ENCODE measurements at regions of chr5 and their contacts with region 1.

Region 1: DNA sequence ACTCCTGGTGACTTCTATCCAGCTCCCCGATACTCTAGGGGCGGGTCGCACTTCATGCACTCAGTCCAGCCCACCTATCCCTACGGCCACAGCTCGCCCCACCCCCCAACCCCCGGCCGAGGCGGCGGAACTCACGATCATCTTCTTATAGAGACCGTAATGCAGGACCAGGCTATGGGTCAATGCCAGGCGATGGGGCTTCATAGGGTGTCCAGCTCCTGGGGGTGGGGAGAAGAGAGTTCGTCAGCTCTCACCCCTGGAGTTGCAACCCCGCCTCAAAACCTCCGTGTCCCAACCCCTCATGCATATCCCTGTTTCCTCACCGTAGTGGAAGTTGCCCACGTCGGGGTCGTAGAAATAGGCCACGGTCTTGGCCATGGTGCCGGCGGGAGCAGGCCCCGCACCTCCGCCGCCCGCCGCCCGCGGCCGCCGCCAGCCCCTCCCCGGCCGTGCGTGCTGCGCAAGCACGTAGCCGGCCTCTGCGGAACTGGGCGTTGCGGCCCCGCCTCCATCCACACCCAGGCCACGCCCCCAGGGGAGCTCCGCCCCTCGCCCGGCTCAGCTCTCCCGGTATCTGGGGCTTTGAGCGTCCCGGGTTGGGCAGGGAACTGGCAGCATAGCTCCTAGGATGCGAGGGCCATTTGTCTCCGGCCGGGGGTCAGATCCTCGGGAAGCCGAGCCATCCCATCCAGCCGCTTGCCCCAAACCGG is at the starts of genes HDAC3 and RELL2:
- DNase-seq: peak; percentile 88 to 97 (median 94)
- ATAC-seq: peak; percentile 89
- H3K4me3 ChIP-seq: peak within 1 kb of the TSS; percentile 98 to 99
- H3K4me3 Mint-ChIP-seq: peak within 1 kb of the TSS; percentile 92
- H3K27ac ChIP-seq: peak within 1 kb of the TSS; percentile 78 to 81
- H3K27ac Mint-ChIP-seq: peak within 1 kb of the TSS; percentile 89
- H3K4me1 ChIP-seq: peaks cover 28% of the 10 kb centered on the region
- H3K4me1 Mint-ChIP-seq: peaks cover 50% of the 10 kb centered on the region
- H3K27me3 ChIP-seq: no peaks in the 10 kb centered on the region
- H3K27me3 Mint-ChIP-seq: no peaks in the 10 kb centered on the region
- CTCF ChIP-seq: no peak
- total RNA-seq, gene HDAC3: 48.9 to 54.8 TPM
- total RNA-seq, gene RELL2: 9.5 to 9.8 TPM

Region 2: DNA sequence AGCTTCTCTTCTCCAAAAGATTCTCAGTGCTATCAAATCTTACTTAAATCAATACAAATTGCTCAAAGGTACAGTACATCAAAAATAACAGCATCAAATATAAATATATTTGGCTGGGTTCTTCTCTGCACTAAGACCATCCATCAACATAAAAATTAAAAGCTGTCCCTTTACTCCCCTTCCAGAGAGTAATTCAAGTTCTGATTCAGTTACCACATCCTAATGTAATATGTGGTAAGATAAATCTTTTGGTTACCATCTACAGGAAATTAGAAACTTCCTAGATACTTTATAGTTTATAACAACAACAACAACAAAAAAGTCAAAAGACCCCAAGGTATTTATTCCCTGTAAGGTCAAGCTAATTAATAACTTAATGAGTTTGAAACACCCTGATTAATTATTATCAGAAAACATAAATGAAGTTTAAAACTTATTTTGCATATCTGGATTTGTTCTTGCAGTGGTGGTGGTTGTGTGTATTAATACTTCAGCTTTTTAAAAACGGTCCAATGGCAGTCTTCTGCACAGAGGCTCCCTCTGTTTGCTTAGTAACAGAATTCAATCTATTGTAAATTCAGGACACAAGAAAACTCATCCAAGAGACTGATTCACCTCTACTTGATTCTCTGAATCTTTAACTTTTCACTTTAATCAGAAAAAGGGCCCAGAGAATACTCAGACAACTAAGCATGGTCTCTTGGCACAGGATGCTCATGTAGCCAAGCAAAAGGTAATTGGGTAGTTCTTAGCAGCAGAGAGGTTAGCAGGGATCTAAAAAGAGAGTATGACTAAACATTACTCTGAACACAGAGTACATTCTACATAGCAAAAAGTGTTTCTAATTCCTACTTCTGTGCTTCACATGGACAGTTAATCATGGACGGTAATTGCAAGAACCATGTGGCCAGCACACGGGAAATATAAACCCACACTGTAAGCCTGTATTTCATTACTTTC is 37.9 kb before region 1 on chr5:
- CTCF ChIA-PET with region 1: interaction called, 39 read pairs
- POLR2A ChIA-PET with region 1: interaction called, 4 read pairs
- intact Hi-C with region 1: no loop called
- DNase-seq: peak in 1 of 9 experiments; percentile 29
- ATAC-seq: peak; percentile 44
- H3K4me3 ChIP-seq: no peak overlapping the region
- H3K4me3 Mint-ChIP-seq: peak overlapping the region; percentile 40
- H3K27ac ChIP-seq: peak overlapping the region in 1 of 2 experiments; percentile 67
- H3K27ac Mint-ChIP-seq: peak overlapping the region; percentile 78
- H3K4me1 ChIP-seq: peaks cover 69% of the 10 kb centered on the region
- H3K4me1 Mint-ChIP-seq: peaks cover 80% of the 10 kb centered on the region
- H3K27me3 ChIP-seq: no peaks in the 10 kb centered on the region
- H3K27me3 Mint-ChIP-seq: no peaks in the 10 kb centered on the region
- CTCF ChIP-seq: no peak

Measured in CD8-positive, alpha-beta T cell (primary cell).